Ovary (tissue), 10 donors: ENCODE measurements at regions of chr1 and their contacts with region 1.

Region 1: GRCh38 chr1:234610348-234611152 is 572 bp upstream of the IRF2BP2 start:
- DNase-seq: peak; percentile 96 to 98 (median 97)
- H3K4me3 ChIP-seq: peak overlapping the region; percentile 46
- H3K27ac ChIP-seq: peak overlapping the region; percentile 85 to 98
- H3K4me1 ChIP-seq: peaks cover 19% of the 10 kb centered on the region
- H3K27me3 ChIP-seq: no peaks in the 10 kb centered on the region
- CTCF ChIP-seq: peak in 2 of 3 donors; percentile 37 to 53
- EP300 ChIP-seq: no peak
- POLR2A ChIP-seq: peak; percentile 95

Region 2: DNA sequence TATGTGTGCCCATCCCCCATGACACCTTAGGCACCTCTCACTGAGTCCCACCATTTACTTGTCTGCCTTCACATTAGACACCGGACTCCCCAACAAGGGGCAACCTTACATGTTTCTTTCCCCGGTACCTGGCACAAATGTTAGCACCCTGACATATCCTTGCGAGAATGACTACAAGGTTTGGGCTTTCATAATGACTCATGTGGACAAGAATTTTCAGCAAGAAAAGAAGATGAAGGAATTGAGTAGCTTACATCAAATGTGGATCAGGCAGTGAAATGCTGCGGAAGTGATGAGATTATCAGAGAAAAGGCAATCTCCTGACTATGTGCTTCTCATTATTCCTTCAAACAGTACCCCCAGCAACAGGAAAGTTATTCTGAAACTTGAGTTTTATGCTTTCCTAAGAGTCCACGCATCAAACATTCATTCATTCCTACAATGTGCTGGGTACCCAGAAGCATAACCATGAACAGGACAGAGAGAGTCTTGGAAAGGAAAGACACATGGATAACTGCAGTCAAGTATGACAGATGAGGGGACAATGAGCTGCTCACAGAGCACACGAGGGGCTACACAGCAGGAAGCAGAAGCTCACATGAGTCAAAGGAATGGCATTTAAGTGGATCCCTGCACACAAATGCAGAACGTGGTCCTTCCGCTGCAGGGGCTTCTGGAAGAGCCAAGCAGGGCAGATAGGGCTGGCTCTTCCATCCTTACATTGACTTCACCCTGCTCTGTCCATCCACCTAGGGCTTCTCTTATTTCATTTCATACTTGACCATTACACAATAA is 1427.1 kb before region 1 on chr1:
- intact Hi-C with region 1: no loop called
- DNase-seq: no peak
- H3K4me3 ChIP-seq: no peak overlapping the region
- H3K27ac ChIP-seq: no peak overlapping the region
- H3K4me1 ChIP-seq: no peaks in the 10 kb centered on the region
- H3K27me3 ChIP-seq: no peaks in the 10 kb centered on the region
- CTCF ChIP-seq: no peak
- EP300 ChIP-seq: no peak
- POLR2A ChIP-seq: no peak

Region 3: DNA sequence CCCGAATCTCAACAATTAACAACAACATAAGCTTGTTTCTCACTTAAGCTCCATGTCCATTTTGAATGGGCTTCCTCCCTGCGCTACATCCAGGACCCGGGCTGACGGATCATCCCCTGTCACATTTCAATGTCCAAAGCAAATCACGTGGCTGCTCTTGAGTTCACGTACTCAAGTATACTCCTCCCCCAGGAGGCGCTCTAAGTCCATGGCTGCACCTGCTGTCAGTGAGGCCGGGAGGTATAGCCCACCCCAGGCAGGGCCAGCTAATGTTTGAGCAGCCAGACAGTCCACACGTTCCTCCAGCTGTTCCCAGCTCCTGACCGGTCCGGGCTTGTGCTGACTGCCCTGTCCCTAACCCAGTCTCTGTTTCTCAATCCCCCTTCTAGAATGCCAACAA is 485.3 kb before region 1 on chr1:
- intact Hi-C with region 1: no loop called
- DNase-seq: no peak
- H3K4me3 ChIP-seq: no peak overlapping the region
- H3K27ac ChIP-seq: no peak overlapping the region
- H3K4me1 ChIP-seq: no peaks in the 10 kb centered on the region
- H3K27me3 ChIP-seq: no peaks in the 10 kb centered on the region
- CTCF ChIP-seq: no peak
- EP300 ChIP-seq: no peak
- POLR2A ChIP-seq: no peak

Region 4: DNA sequence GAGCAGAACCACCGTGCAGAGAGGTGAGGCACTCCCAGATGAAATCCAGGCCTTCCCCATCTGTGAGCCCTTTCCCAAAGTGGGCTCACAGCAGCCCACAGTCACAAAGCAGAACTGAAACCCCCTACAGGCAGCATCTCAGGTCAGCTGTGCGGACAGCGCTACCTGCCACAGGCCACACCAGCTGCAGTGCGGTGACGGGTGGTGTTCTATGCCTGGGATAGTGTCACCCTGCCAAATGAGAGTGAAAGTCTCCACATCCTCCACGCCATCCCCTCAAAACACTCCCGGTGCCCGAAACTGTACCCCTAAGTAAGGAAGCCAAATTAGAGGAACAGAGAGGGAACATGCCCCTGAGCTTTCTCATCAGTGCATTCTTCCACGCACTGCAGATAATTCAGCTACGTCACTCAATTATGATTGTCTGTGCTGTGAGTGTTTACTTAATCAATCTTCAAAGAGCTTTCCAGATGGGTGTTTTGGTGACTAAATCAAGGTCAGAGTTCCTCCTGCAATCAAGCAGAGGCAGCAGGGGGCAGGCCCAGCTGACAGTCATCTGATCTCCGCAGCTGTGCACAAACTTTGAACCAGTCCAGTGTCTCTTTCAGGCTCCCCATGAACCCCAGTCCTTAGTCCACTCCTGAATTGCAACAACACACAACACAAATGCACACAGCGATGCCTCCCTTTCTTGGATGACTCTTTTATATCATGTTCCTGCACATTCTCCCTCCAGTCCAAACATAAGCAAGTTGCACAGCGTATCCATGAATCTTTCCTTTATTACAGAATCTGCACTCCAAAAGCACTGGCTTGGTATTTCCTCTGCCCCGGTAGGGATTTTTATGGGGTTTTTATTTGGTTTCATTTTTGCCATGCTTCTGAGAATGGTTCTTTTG is 368.1 kb after region 1 on chr1:
- intact Hi-C with region 1: loop called in 2 of 4 experiments (anchors 5 kb)
- DNase-seq: peak in 1 of 5 donors; percentile 56
- H3K4me3 ChIP-seq: no peak overlapping the region
- H3K27ac ChIP-seq: peak overlapping the region in 1 of 2 donors; percentile 83
- H3K4me1 ChIP-seq: peaks cover 34% of the 10 kb centered on the region
- H3K27me3 ChIP-seq: no peaks in the 10 kb centered on the region
- CTCF ChIP-seq: no peak
- EP300 ChIP-seq: no peak
- POLR2A ChIP-seq: no peak

Region 5: GRCh38 chr1:234987415-234988154 is 377.0 kb after region 1 on chr1:
- intact Hi-C with region 1: loop called in 3 of 4 experiments (anchors 5 kb)
- DNase-seq: peak; percentile 70 to 92 (median 82)
- H3K4me3 ChIP-seq: no peak overlapping the region
- H3K27ac ChIP-seq: peak overlapping the region; percentile 44 to 76
- H3K4me1 ChIP-seq: peaks cover 19% of the 10 kb centered on the region
- H3K27me3 ChIP-seq: no peaks in the 10 kb centered on the region
- CTCF ChIP-seq: no peak
- EP300 ChIP-seq: no peak
- POLR2A ChIP-seq: no peak

Region 6: GRCh38 chr1:234997201-234997895 is 386.8 kb after region 1 on chr1:
- intact Hi-C with region 1: loop called in 1 of 4 experiments (anchors 5 kb)
- DNase-seq: peak; percentile 93 to 97 (median 97)
- H3K4me3 ChIP-seq: no peak overlapping the region
- H3K27ac ChIP-seq: peak overlapping the region; percentile 62 to 64
- H3K4me1 ChIP-seq: peaks cover 9% of the 10 kb centered on the region
- H3K27me3 ChIP-seq: no peaks in the 10 kb centered on the region
- CTCF ChIP-seq: no peak
- EP300 ChIP-seq: peak; percentile 78
- POLR2A ChIP-seq: peak; percentile 22